ENCODE measurements at regions of chr6 and their contacts with region 1.

Region 1: GRCh38 chr6:117602151-117602898 is at the start of gene GOPC:
- DNase-seq: peak; percentile 99
- H3K4me3 ChIP-seq: peak within 1 kb of the TSS; percentile 74
- H3K27ac ChIP-seq: peak within 1 kb of the TSS; percentile 82
- H3K4me1 ChIP-seq: peaks cover 11% of the 10 kb centered on the region
- H3K27me3 ChIP-seq: no peaks in the 10 kb centered on the region
- CTCF ChIP-seq: 0 out of 2 replicates have a peak, but pooled peaks have one; percentile 24
- total RNA-seq, gene GOPC: 18.9 and 20.8 TPM in 2 replicates

Region 2: GRCh38 chr6:117346142-117346930 is 256.0 kb before region 1 on chr6:
- CTCF ChIA-PET with region 1: no interaction called
- POLR2A ChIA-PET with region 1: no interaction called
- intact Hi-C with region 1: loop called (anchors 1 kb)
- DNase-seq: peak; percentile 39
- H3K4me3 ChIP-seq: no peak overlapping the region
- H3K27ac ChIP-seq: no peak overlapping the region
- H3K4me1 ChIP-seq: no peaks in the 10 kb centered on the region
- H3K27me3 ChIP-seq: peaks cover 22% of the 10 kb centered on the region
- CTCF ChIP-seq: peak; percentile 59; the same call in 1 of the 2 replicates

Region 3: DNA sequence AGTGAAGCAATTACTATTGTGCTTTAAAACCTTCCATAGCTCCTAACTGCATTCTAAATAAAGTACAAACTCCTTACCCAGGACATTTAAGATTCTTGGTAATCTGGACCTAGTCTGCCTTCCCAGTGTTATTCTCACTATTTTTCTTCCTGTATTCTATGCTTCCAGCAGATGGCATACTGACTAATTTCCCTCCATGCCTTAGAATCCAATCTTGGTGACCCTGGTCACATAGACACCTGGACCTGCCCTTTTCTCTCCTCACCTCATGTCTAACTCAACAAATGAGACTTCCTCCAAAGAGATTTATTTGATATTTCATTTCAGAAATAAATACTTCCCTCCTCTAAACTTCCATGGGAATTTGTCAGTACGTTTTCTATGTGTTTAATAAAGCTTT is 202.4 kb before region 1 on chr6:
- CTCF ChIA-PET with region 1: no interaction called
- POLR2A ChIA-PET with region 1: no interaction called
- intact Hi-C with region 1: loop called (anchors 5 kb)
- DNase-seq: peak; percentile 4
- H3K4me3 ChIP-seq: no peak overlapping the region
- H3K27ac ChIP-seq: no peak overlapping the region
- H3K4me1 ChIP-seq: no peaks in the 10 kb centered on the region
- H3K27me3 ChIP-seq: peaks cover 1% of the 10 kb centered on the region
- CTCF ChIP-seq: peak; percentile 42

Region 4: DNA sequence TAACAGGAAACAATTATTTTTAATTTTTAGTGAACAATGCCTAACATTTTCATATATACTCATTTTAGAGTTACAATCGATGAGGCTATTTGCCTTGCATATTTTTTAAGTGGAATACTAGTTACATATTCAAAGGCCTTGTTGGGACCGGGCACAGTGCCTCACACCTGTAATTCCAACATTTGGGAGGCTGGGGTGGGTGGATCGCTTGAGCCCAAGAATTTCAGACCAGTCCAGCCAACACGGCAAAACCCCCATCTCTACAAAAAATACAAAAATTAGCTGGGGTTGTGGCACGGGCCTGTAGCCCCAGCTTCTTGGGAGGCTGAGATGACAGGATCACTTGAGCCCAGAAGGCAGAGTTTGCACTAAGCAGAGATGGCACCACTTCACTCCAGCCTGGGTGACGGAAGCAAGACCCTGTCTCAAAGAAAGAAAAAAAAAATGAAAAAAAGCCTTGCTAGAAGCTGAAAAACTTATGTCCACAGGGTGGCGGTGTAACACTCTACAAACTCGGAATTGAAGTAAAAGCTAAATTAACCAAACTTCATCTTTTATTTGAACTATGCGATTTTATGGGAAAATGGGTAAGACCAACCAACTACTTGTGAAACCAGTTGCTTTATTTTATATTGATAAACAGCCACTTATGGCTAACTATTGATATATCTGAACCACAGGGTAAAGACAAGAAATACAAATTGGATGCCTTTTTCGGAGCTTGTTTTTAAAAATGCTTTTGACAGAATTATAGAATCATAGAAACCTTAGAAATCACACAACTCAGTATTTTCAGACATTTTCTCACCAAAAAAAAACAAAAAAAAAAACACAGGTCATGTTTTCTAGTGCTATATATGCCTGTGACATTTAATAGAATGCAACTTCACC is 152.5 kb before region 1 on chr6:
- CTCF ChIA-PET with region 1: interaction called, 11 read pairs
- POLR2A ChIA-PET with region 1: no interaction called
- intact Hi-C with region 1: loop called (anchors 1 kb)
- DNase-seq: peak; percentile 78
- H3K4me3 ChIP-seq: no peak overlapping the region
- H3K27ac ChIP-seq: no peak overlapping the region
- H3K4me1 ChIP-seq: no peaks in the 10 kb centered on the region
- H3K27me3 ChIP-seq: peaks cover 42% of the 10 kb centered on the region
- CTCF ChIP-seq: peak; percentile 79

Measured in A673 (cell line).